Caco-2 (cell line): ENCODE measurements at regions of chr1 and their contacts with region 1.

Region 1: DNA sequence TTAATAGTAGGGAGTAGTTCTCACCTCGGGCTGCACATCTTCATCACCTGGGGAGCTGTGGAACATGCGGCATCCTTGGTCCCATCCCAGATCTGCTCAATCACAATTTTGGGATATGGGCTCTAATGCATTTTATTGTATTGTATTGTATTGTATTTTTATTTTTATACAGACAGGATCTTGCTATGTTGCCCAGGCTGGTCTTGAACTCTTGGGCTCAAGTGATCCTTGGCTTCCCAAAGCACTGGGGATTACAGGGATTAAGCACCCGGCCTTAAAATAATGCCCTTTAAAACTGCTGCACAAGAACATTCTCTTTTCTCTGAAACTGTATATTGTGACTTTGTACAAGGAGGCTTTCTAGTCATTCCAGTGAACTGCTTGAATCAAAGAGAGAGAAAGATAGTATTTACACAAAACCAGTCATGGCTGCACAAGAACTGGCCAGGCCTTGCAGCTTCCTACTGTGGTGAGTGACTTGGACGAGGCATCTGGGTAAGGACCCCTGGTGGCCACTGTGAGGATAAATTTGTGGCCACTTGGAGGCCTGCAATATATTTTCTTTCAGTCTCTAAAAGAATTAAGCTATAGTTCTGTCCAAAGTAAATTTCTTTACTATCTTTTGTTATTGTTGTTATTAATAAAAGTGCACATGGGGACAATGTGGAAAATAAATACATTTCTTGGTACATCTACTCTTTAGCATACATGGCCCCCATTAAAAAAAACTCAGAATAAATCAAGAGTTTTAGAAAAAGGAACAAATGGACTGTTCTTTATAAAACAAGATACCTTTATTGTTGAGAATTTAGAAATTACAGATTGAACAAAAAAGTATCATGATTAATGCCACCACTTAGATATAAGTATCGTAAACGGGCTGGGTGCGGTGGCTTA is 48.0 kb downstream of the TBCE start:
- DNase-seq: peak; percentile 80
- H3K4me3 ChIP-seq: no peak overlapping the region
- H3K4me3 Mint-ChIP-seq: no peak overlapping the region
- H3K27ac Mint-ChIP-seq: no peak overlapping the region
- H3K4me1 ChIP-seq: no peaks in the 10 kb centered on the region
- H3K4me1 Mint-ChIP-seq: no peaks in the 10 kb centered on the region
- H3K27me3 ChIP-seq: no peaks in the 10 kb centered on the region
- H3K27me3 Mint-ChIP-seq: no peaks in the 10 kb centered on the region
- CTCF ChIP-seq: peak; percentile 84 to 91

Region 2: GRCh38 chr1:234486498-234487448 is 928.5 kb before region 1 on chr1:
- CTCF ChIA-PET with region 1: no interaction called
- POLR2A ChIA-PET with region 1: no interaction called
- intact Hi-C with region 1: loop called (anchors 1 kb)
- DNase-seq: peak in 1 of 2 experiments; percentile 57
- H3K4me3 ChIP-seq: no peak overlapping the region
- H3K4me3 Mint-ChIP-seq: no peak overlapping the region
- H3K27ac Mint-ChIP-seq: no peak overlapping the region
- H3K4me1 ChIP-seq: peaks cover 14% of the 10 kb centered on the region
- H3K4me1 Mint-ChIP-seq: peaks cover 10% of the 10 kb centered on the region
- H3K27me3 ChIP-seq: no peaks in the 10 kb centered on the region
- H3K27me3 Mint-ChIP-seq: peaks cover 3% of the 10 kb centered on the region
- CTCF ChIP-seq: peak; percentile 48 to 62

Region 3: GRCh38 chr1:235093696-235094592 is 321.3 kb before region 1 on chr1:
- CTCF ChIA-PET with region 1: no interaction called
- POLR2A ChIA-PET with region 1: no interaction called
- intact Hi-C with region 1: loop called (anchors 1 kb)
- DNase-seq: peak; percentile 68 to 83
- H3K4me3 ChIP-seq: no peak overlapping the region
- H3K4me3 Mint-ChIP-seq: no peak overlapping the region
- H3K27ac Mint-ChIP-seq: no peak overlapping the region
- H3K4me1 ChIP-seq: peaks cover 8% of the 10 kb centered on the region; the same call in 1 of the 2 replicates
- H3K4me1 Mint-ChIP-seq: peaks cover 18% of the 10 kb centered on the region
- H3K27me3 ChIP-seq: no peaks in the 10 kb centered on the region
- H3K27me3 Mint-ChIP-seq: no peaks in the 10 kb centered on the region
- CTCF ChIP-seq: peak; percentile 88 to 92

Region 4: GRCh38 chr1:235105051-235106043 is 309.9 kb before region 1 on chr1:
- CTCF ChIA-PET with region 1: interaction called, 5 read pairs
- POLR2A ChIA-PET with region 1: no interaction called
- intact Hi-C with region 1: loop called (anchors 1 kb)
- DNase-seq: no peak
- H3K4me3 ChIP-seq: no peak overlapping the region
- H3K4me3 Mint-ChIP-seq: peak overlapping the region; percentile 72
- H3K27ac Mint-ChIP-seq: peak overlapping the region; percentile 90
- H3K4me1 ChIP-seq: peaks cover 12% of the 10 kb centered on the region; the same call in 1 of the 2 replicates
- H3K4me1 Mint-ChIP-seq: peaks cover 16% of the 10 kb centered on the region
- H3K27me3 ChIP-seq: no peaks in the 10 kb centered on the region
- H3K27me3 Mint-ChIP-seq: no peaks in the 10 kb centered on the region
- CTCF ChIP-seq: no peak

Region 5: DNA sequence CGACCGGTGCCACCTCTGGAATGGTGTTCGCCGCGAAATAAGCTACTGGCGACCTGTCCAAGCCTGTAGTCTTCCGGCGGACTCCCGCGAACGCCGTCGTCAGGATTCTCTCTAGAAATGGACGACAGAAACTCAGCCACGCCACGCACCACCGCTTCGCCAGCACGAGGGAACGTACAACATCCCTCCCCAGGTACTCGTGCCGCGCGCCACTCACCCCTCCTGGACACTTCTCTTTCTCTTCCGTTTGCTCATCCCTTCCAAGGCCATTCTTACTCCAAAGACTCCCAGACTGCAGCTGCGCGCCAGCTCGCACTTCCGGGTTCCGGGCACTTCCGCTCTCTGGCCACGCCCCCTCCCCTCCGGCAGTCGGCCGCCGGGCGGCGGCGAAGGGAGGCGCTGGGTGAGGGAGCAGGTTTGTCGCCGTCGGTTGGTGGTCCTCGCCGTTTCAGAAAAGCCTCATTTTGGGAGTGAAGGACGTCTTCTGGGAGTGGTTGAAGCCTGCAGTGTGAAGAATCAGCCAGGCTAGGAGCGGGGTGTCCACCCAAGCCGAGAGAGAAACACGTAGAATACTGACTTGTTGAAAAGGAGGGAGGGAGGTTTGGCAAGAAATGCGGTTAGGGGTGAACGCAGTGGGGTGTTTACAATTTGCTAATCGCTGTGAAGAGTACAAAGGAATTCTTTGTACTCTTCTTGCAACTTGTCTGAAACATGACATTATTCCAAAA is 254.1 kb before region 1 on chr1 and contains the start of gene RBM34:
- CTCF ChIA-PET with region 1: interaction called, 6 read pairs
- POLR2A ChIA-PET with region 1: no interaction called
- intact Hi-C with region 1: loop called (anchors 1 kb)
- DNase-seq: peak; percentile 92 to 96
- H3K4me3 ChIP-seq: peak within 1 kb of the TSS; percentile 50
- H3K4me3 Mint-ChIP-seq: peak within 1 kb of the TSS; percentile 98
- H3K27ac Mint-ChIP-seq: peak within 1 kb of the TSS; percentile 99
- H3K4me1 ChIP-seq: peaks cover 14% of the 10 kb centered on the region; the same call in 1 of the 2 replicates
- H3K4me1 Mint-ChIP-seq: peaks cover 12% of the 10 kb centered on the region
- H3K27me3 ChIP-seq: no peaks in the 10 kb centered on the region
- H3K27me3 Mint-ChIP-seq: no peaks in the 10 kb centered on the region
- CTCF ChIP-seq: peak in 1 of 2 experiments; percentile 28
- total RNA-seq, gene RBM34: 96.5 and 103 TPM in 2 replicates

Region 6: DNA sequence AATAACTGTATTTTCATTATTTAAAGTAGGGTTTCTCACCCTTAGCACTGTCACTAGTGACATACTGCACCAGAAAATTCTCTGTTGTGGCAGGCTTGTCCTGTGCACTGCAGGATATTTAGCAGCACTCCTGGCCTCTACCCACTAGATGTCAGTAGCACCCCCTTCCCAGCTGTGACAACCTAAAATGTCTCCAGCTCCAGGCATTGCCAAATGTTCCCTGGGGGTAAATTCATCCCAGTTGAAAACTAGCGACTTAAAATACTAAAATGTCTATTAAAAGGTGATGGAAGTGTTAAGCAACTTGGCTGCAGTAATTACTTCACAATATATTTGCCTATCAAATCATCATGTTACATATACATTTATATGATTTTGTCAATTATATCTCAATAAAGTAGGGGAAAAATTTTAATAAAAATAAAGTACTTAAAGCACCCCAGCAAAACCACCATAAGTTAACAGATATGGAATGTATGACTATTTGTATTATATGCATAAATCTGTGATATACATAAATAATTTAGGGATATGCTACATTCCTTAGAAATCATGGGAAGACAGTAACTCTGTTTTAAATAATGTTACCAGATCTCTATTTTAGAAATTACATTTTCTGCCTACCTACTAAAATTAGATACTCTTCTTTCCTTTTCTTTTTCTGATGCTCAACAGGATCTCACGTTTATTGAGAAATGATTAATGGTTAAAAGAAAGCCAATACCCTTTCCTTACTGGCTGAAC is 161.9 kb before region 1 on chr1:
- CTCF ChIA-PET with region 1: interaction called, 10 read pairs
- POLR2A ChIA-PET with region 1: no interaction called
- intact Hi-C with region 1: loop called (anchors 1 kb)
- DNase-seq: peak; percentile 77 to 81
- H3K4me3 ChIP-seq: no peak overlapping the region
- H3K4me3 Mint-ChIP-seq: no peak overlapping the region
- H3K27ac Mint-ChIP-seq: no peak overlapping the region
- H3K4me1 ChIP-seq: no peaks in the 10 kb centered on the region
- H3K4me1 Mint-ChIP-seq: peaks cover 7% of the 10 kb centered on the region
- H3K27me3 ChIP-seq: no peaks in the 10 kb centered on the region
- H3K27me3 Mint-ChIP-seq: no peaks in the 10 kb centered on the region
- CTCF ChIP-seq: peak; percentile 84 to 92

Region 7: DNA sequence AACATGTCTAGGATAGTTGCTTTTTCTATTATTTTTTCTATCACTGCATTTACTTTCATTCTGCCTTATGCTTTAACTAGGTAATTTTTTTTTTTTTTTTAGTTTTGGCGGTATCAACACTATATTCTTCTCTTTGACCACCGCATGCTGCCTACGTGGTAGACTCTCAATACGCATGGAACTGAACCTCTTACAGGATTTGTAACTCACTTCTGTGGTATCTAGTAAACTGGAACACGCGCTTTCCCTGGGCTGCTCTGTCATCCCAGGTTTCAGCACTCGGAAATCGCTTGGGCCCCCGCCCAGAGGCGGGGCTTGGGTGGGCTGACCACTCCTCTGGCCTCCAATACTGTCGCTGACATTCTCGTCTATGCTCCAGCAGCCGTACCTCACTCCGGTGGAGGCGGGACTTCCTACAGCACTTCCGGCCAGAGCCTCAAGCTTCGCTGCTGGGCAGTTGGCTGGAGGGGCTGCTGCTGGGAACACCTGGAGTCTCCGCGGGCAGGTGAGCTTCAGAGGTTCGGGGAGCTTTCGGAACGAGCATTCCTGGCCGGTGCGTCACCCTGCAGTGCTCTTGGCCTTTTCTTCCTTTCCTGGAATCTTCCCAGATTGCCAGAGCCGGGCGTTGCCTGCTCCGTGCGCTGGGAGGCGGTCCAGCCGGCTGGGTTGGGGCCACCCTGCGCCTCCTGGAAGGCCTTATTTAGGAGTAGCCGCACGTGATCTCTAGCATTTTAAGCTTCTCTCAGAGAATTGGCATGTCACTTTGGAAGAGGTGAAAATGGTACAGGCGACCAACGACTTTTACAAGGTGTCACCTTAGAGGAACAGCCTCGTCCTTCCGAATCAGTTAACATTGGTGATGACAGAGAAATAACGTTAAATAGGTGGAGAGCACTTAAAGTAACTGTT is 48.0 kb before region 1 on chr1 and contains the start of gene TBCE:
- CTCF ChIA-PET with region 1: interaction called, 10 read pairs
- POLR2A ChIA-PET with region 1: interaction called, 3 read pairs
- intact Hi-C with region 1: loop called (anchors 1 kb)
- DNase-seq: peak; percentile 99
- H3K4me3 ChIP-seq: peak within 1 kb of the TSS; percentile 62
- H3K4me3 Mint-ChIP-seq: peak within 1 kb of the TSS; percentile 99
- H3K27ac Mint-ChIP-seq: peak within 1 kb of the TSS; percentile 98
- H3K4me1 ChIP-seq: peaks cover 12% of the 10 kb centered on the region; the same call in 1 of the 2 replicates
- H3K4me1 Mint-ChIP-seq: peaks cover 22% of the 10 kb centered on the region
- H3K27me3 ChIP-seq: no peaks in the 10 kb centered on the region
- H3K27me3 Mint-ChIP-seq: no peaks in the 10 kb centered on the region
- CTCF ChIP-seq: no peak
- total RNA-seq, gene TBCE: 38.5 and 40.0 TPM in 2 replicates

Region 8: DNA sequence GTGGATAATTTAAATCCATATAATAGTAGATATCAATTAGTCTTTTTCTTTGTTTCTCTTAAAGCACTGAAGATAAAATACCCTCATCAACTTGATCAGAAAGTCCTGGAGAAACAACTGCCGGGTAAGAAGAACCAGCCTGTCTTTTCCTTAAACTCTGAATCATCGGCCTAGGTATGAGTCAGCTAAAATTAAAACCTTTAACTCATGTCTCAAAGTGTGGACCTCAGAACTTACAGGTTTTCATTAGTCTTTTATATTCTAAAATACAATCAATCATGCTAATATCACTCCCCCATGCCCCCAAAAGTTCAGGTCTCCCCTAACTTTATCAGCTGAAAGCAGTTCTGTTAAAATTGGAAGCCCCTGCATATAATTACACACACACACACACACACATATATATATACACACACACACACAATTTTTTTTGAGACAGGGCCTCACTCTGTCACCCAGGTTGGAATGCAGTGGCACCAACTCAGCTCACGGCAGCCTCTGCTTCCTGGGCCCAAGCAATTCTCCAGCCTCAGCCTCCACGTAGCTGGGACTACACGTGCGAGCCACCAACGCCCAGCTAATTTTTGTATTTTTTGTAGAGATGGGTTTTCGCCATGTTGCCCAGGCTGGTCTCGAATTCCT is 27.7 kb after region 1 on chr1:
- CTCF ChIA-PET with region 1: no interaction called
- POLR2A ChIA-PET with region 1: no interaction called
- intact Hi-C with region 1: no loop called
- DNase-seq: no peak
- H3K4me3 ChIP-seq: no peak overlapping the region
- H3K4me3 Mint-ChIP-seq: no peak overlapping the region
- H3K27ac Mint-ChIP-seq: no peak overlapping the region
- H3K4me1 ChIP-seq: no peaks in the 10 kb centered on the region
- H3K4me1 Mint-ChIP-seq: no peaks in the 10 kb centered on the region
- H3K27me3 ChIP-seq: no peaks in the 10 kb centered on the region
- H3K27me3 Mint-ChIP-seq: no peaks in the 10 kb centered on the region
- CTCF ChIP-seq: no peak

Region 9: DNA sequence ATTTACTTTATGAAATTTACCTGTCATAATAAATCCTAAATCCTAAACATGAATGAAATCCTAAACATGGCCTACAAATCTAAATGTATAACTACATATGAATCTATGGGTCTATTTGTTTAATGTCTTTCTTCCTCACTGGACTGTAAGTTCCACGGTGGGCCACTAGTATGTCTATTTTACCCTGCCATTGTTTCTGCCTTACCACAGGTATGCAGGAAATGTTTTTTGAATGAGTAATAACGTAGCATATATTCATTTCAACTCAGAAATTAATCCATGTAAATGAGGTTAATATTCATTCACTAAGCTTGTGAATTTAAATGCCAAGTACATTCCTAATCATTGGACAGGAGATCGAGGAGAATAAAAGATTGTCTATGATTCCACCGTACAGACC is 53.7 kb after region 1 on chr1:
- CTCF ChIA-PET with region 1: no interaction called
- POLR2A ChIA-PET with region 1: no interaction called
- intact Hi-C with region 1: no loop called
- DNase-seq: no peak
- H3K4me3 ChIP-seq: no peak overlapping the region
- H3K4me3 Mint-ChIP-seq: no peak overlapping the region
- H3K27ac Mint-ChIP-seq: no peak overlapping the region
- H3K4me1 ChIP-seq: peaks cover 5% of the 10 kb centered on the region; the same call in 1 of the 2 replicates
- H3K4me1 Mint-ChIP-seq: no peaks in the 10 kb centered on the region
- H3K27me3 ChIP-seq: no peaks in the 10 kb centered on the region
- H3K27me3 Mint-ChIP-seq: no peaks in the 10 kb centered on the region
- CTCF ChIP-seq: no peak